PC-3 (cell line): ENCODE measurements at regions of chr2 and their contacts with region 1.

Region 1: DNA sequence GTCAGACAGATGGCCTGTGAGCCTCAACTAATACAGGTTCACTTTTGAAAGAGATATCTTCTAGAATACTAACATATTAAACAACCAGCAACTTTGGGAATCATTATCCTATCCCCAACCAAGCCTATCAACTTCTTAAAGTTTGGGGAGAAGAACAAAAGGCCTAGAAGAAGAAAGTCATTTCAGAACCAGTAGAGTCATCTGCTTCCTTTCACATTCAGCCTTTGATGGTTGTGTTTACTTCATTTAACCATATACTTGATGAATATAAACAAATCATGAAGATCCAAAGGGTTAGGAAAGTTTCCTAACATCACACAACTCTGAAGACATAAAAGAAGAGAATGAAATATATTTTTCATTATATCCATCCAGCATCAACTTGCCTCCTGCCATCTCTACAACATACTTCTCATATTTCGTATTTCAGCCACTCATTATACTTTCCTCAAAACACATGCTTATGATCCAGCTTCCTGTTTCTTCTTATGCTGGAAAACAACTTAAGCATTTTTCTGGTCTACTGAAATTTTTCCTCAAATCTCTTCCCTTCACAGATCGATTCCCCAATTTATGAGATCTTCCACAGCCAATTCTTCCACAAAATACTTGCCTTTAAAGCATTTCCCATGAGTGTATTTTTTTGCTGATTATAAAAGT is 114.3 kb downstream of the CACNB4 start:
- DNase-seq: no peak
- ATAC-seq: no peak
- H3K4me3 ChIP-seq: no peak overlapping the region
- H3K27ac ChIP-seq: no peak overlapping the region
- H3K4me1 ChIP-seq: no peaks in the 10 kb centered on the region
- H3K27me3 ChIP-seq: peaks cover 88% of the 10 kb centered on the region
- CTCF ChIP-seq: no peak

Region 2: DNA sequence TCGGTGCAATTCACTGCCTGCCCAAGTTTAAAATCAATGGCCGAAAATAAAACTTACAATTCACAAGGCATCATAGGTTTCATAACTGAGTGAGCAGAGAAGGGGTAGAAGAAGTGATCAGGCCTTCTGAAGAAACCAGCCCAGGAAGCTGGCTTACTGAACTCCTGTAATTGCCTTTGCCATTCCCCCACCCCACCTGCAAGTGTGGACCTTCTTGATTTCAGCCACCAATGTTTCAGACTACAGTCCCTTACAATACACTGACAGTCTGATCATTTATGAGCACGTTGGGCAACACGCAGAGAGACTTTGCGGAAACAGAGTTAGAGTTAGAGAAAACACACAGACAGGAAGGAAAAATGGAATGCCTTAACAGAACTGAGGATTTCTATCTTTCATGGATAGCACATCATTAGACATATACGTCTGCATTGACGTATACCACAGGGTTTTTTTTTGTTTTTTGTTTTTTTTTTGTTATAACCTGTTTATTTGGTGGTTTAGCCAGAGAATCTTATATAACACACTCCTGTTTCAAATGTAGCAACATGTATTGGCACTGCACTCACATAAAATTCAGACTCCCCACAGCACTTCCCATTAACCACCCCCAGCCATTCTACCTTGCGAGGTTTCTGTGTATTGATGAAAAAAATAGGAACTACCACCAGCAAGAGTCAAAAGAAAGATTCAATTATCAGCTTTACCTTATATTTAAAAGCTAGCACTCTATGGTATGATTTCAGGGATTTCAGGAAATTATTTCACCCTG is 12.1 kb before region 1 on chr2:
- CTCF ChIA-PET with region 1: no interaction called
- POLR2A ChIA-PET with region 1: interaction called, 12 read pairs
- intact Hi-C with region 1: no loop called
- DNase-seq: no peak
- ATAC-seq: no peak
- H3K4me3 ChIP-seq: no peak overlapping the region
- H3K27ac ChIP-seq: no peak overlapping the region
- H3K4me1 ChIP-seq: no peaks in the 10 kb centered on the region
- H3K27me3 ChIP-seq: peaks cover 94% of the 10 kb centered on the region
- CTCF ChIP-seq: no peak

Region 3: DNA sequence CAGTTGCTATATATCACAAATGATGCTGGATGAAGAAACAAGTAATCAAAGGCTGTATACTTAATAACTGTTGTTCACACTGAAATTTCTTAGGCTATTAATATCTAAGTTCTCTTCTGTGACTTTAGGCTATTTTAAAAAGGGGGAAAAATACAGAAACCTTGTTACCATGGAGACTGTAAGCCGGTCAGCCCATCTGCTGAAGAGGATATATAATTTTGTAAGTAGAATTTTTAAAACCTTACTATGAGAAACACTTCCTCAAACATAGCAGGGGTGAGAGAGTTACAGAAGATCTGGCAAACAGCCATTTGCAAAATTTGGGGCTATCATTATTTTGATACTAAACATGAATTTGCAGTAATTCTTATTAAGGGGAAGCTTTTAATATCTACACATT is 86.5 kb after region 1 on chr2:
- CTCF ChIA-PET with region 1: no interaction called
- POLR2A ChIA-PET with region 1: no interaction called
- intact Hi-C with region 1: no loop called
- DNase-seq: no peak
- ATAC-seq: no peak
- H3K4me3 ChIP-seq: no peak overlapping the region
- H3K27ac ChIP-seq: no peak overlapping the region
- H3K4me1 ChIP-seq: no peaks in the 10 kb centered on the region
- H3K27me3 ChIP-seq: peaks cover 3% of the 10 kb centered on the region; the same call in 1 of the 2 replicates
- CTCF ChIP-seq: no peak

Region 4: GRCh38 chr2:152106464-152106863 is 121.9 kb after region 1 on chr2:
- CTCF ChIA-PET with region 1: no interaction called
- POLR2A ChIA-PET with region 1: no interaction called
- intact Hi-C with region 1: no loop called
- DNase-seq: peak; percentile 65
- ATAC-seq: peak; percentile 82
- H3K4me3 ChIP-seq: no peak overlapping the region
- H3K27ac ChIP-seq: no peak overlapping the region
- H3K4me1 ChIP-seq: peaks cover 5% of the 10 kb centered on the region; the same call in 1 of the 2 replicates
- H3K27me3 ChIP-seq: 0 out of 2 replicates have a peak, but pooled peaks cover under 1% of the 10 kb centered on the region
- CTCF ChIP-seq: no peak